Activated T-helper 2 cell treated with anti-CD3 and anti-CD28 coated beads, Interferon-gamma antibody, Interleukin-2, Interleukin-4, amounts not matched to agents 10 μg/mL and 5 μg/mL and 100 μg/mL, durations not matched to agents 14 hours and 24 hours and 36 hours (primary cell): ENCODE measurements at regions of chr17 and their contacts with region 1.

Region 1: DNA sequence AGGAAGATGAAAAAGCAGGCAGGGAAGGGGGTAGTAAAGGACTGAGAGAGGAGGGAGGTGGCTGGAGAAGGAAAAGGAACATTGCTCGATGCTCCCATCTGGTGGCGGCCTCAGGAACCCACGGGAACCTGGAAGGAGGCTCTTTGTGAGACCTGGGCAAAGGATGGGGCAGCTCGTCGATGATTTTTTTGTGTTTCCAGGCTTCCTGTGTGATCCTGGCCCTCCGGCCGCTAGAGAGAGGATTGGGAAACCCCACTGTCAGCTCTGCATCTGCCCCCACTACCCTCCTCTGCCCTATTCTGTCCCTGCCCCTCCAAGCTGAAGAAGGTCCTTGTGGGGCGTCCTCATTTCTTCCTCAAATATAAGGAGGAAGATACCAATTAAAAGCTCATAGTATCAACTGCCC is 6.6 kb downstream of the WFIKKN2 start:
- DNase-seq: peak; percentile 38
- H3K4me3 Mint-ChIP-seq: no peak overlapping the region
- H3K27ac Mint-ChIP-seq: no peak overlapping the region
- H3K4me1 Mint-ChIP-seq: no peaks in the 10 kb centered on the region
- H3K27me3 Mint-ChIP-seq: peaks cover 2% of the 10 kb centered on the region

Region 2: DNA sequence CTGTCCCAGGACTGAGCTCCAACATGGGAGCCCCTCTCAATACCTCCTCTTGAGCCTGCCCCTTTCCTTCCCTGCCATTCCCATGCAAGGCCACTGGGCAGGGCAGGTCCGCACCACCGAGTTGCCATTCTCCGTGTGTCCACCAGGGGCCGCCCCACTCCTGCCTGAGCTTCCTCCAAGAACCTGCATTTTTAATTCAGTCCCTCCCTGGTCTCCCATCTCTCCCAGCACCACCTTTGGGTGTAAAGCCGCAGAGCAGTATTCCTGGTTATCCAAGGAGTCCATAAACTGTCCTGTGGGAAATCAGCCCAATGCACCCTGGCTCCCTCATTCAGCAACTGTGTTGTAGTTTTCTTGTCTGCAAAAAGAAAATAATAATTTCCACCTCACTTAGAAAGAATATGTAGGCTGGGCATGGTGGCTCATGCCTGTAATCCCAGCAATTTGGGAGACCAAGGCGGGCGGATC is 58.7 kb before region 1 on chr17:
- intact Hi-C with region 1: loop called (anchors 1 kb)
- DNase-seq: peak; percentile 75
- H3K4me3 Mint-ChIP-seq: no peak overlapping the region
- H3K27ac Mint-ChIP-seq: no peak overlapping the region
- H3K4me1 Mint-ChIP-seq: peaks cover 19% of the 10 kb centered on the region
- H3K27me3 Mint-ChIP-seq: peaks cover 58% of the 10 kb centered on the region